Mammary epithelial cell (primary cell): ENCODE measurements at regions of chr22 and their contacts with region 1.

Region 1: DNA sequence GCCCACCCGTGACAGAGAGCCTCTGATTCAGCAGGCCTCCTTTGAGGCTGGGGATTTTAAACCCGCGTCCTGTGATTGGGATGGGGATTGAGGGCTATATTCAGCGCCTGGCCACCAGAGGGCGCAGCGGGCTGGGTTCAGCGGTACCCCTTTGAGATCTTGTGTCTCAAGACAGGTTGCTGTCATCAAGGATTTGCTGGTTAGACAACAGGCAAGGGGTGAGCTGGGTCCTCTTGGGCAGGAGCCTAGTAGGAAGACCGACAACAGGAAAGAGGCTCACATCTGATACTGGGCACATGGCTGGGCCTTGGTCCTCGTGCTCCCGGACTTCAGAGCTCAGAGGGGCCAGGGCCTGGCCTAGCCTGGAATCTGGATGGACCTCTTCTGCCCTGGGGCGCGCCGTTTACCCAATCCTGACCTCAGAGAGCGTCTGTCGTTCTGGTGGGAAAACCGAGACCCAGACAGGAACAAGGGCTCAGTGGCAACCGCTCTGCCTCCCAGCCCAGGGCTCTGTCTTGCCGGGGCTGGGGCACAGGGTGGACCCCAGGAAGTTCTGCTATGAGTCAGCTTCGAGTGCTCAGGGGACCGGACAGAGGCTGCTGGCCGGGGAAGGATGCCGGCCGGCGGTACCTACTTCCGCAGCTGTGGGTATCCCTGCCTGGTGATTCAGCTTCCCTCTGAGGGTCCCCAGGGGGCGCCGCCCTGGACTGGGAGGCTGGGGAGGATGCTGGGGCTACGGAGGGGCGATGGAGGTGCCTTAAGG is 929 bp upstream of the SLC35E4 start:
- DNase-seq: peak; percentile 82
- H3K4me3 ChIP-seq: peak overlapping the region in 1 of 3 experiments; percentile 38
- H3K27ac ChIP-seq: no peak overlapping the region
- H3K4me1 ChIP-seq: peaks cover 27% of the 10 kb centered on the region
- H3K27me3 ChIP-seq: no peaks in the 10 kb centered on the region
- CTCF ChIP-seq: peak; percentile 93

Region 2: GRCh38 chr22:30591588-30592359 is 42.9 kb before region 1 on chr22 and contains the start of gene PES1:
- CTCF ChIA-PET with region 1: no interaction called
- dilution Hi-C with region 1: no loop called
- in situ Hi-C with region 1: no loop called
- intact Hi-C with region 1: no loop called
- DNase-seq: peak; percentile 96
- H3K4me3 ChIP-seq: peak within 1 kb of the TSS; percentile 65 to 94 (median 84)
- H3K27ac ChIP-seq: peak within 1 kb of the TSS; percentile 97
- H3K4me1 ChIP-seq: peaks cover 11% of the 10 kb centered on the region
- H3K27me3 ChIP-seq: no peaks in the 10 kb centered on the region
- CTCF ChIP-seq: no peak
- total RNA-seq, gene PES1: 52.2 to 99.1 TPM

Region 3: DNA sequence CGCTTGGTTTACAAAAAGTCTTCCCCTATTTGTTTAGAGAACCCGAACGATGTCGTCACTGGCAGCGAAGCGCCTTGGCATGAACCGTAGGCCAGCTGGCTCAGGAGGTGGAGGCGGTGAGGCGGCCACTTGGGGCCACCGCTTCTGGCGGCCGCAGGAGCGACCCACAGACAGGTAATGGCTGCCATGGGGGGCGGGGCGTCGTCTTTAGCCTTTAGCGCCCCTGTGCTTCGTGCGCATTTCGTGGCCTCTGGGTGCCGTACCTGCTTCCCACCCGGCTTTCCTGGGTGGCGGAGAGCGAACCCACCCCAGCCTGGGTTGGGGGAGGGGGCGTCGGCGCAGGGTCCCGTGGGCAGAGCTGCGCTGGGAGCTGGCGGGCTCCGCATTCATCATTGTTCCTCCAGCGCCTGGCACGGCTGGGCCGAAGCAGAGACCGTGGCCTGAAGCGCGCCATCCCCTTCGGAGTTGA is 59.6 kb after region 1 on chr22:
- CTCF ChIA-PET with region 1: no interaction called
- dilution Hi-C with region 1: no loop called
- in situ Hi-C with region 1: no loop called
- intact Hi-C with region 1: loop called (anchors 1 kb)
- DNase-seq: peak; percentile 21
- H3K4me3 ChIP-seq: peak overlapping the region; percentile 40 to 70 (median 70)
- H3K27ac ChIP-seq: no peak overlapping the region
- H3K4me1 ChIP-seq: peaks cover 3% of the 10 kb centered on the region
- H3K27me3 ChIP-seq: no peaks in the 10 kb centered on the region
- CTCF ChIP-seq: no peak

Region 4: DNA sequence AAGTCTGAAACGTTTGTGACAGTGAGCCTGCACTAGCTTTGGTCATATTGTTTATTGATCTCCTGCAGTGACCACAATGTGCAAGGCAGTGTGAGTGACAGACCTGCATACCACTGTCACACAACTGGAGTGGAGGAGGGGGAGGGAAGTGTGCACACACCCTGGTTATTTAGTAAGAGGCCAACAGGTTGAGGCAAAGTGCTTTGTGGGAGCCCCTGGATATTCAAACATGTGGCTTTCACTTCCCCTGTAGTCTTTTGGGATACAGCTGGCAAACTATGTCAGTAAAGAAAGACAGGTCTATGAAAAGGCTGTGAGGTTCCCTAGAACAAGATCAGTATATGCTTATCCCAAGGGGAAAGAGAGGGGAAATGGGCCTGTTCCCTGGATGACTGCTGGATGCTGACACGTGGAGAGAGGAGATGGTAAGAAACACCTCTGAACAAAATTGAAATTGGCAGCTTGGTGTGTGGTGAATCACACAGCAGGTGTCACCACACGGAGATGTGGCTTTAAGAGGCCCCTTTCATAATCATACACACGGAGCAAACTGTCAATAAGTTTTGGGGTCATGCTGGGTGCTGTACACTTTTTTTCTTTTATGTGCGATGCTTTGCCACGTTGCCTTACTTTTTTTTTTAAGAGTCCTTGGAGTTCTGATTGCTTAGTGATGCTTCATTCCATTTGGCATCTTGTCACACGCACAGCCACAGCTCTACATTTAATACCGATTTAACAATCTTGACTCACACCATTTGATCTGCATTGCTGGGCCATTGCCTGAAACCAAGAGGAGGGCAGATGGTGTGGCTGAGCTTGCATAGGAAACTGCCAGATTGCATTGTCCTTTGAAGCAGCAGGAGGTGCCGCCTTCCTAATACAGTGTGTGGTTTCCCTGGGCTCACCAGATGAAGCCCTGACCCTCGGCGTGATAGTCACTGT is 71.3 kb after region 1 on chr22:
- CTCF ChIA-PET with region 1: no interaction called
- dilution Hi-C with region 1: no loop called
- in situ Hi-C with region 1: no loop called
- intact Hi-C with region 1: no loop called
- DNase-seq: no peak
- H3K4me3 ChIP-seq: no peak overlapping the region
- H3K27ac ChIP-seq: no peak overlapping the region
- H3K4me1 ChIP-seq: peaks cover 5% of the 10 kb centered on the region
- H3K27me3 ChIP-seq: no peaks in the 10 kb centered on the region
- CTCF ChIP-seq: no peak

Region 5: DNA sequence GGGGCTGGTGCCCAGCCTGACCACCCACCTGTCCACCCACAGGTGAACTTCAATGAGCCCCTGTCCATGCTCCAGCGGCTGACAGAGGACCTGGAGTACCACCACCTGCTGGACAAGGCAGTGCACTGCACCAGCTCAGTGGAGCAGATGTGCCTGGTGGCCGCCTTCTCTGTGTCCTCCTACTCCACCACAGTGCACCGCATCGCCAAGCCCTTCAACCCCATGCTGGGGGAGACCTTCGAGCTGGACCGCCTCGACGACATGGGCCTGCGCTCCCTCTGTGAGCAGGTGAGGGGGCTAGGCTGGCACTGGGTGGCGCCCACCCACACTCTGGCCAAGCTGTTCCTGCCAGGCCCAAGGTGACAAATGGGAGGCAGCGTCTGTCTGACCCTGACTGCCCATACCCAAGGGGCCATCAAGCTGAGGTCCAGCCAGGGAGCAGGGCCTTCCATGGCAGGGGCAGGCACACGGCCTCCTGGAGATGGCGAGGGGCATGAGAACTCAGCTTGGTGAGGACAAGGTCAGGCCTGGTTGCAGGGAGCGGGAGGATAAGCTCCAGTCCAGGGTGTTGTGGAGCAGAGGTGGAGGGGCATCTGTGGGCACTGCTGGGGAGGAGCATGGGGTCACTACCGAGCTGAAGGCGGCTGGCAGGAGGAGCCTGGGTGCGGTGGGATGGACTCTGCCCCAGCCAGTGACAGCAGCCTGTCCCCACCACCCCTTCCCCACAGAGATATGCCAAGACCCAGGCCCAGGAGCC is 256.2 kb after region 1 on chr22:
- CTCF ChIA-PET with region 1: no interaction called
- dilution Hi-C with region 1: no loop called
- in situ Hi-C with region 1: loop called in 1 of 2 experiments (anchors 25 kb)
- intact Hi-C with region 1: no loop called
- DNase-seq: peak; percentile 22
- H3K4me3 ChIP-seq: no peak overlapping the region
- H3K27ac ChIP-seq: no peak overlapping the region
- H3K4me1 ChIP-seq: no peaks in the 10 kb centered on the region
- H3K27me3 ChIP-seq: no peaks in the 10 kb centered on the region
- CTCF ChIP-seq: peak; percentile 91 to 93

Region 6: DNA sequence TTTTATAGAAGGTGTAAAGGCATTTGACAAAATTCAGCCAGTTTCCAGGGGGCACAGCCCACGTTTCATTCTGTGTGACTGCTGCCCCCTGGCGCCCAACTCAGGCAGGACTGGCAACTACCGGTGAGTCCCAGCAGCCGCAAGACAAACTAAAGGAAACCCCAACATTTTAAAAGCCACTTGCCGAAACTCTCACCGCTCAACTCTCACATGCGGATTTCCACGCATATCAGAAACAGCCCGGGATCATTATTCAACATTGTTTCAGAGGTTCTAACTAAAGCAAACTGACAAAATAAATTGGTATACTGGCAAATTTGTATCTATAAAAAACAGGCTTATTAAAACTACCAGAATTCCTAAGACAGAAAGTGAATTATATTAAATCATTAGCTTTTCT is 285.8 kb after region 1 on chr22:
- CTCF ChIA-PET with region 1: interaction called, 17 read pairs
- dilution Hi-C with region 1: no loop called
- in situ Hi-C with region 1: no loop called
- intact Hi-C with region 1: loop called (anchors 1 kb)
- DNase-seq: peak; percentile 52
- H3K4me3 ChIP-seq: no peak overlapping the region
- H3K27ac ChIP-seq: no peak overlapping the region
- H3K4me1 ChIP-seq: peaks cover 9% of the 10 kb centered on the region
- H3K27me3 ChIP-seq: no peaks in the 10 kb centered on the region
- CTCF ChIP-seq: peak; percentile 75 to 89

Region 7: DNA sequence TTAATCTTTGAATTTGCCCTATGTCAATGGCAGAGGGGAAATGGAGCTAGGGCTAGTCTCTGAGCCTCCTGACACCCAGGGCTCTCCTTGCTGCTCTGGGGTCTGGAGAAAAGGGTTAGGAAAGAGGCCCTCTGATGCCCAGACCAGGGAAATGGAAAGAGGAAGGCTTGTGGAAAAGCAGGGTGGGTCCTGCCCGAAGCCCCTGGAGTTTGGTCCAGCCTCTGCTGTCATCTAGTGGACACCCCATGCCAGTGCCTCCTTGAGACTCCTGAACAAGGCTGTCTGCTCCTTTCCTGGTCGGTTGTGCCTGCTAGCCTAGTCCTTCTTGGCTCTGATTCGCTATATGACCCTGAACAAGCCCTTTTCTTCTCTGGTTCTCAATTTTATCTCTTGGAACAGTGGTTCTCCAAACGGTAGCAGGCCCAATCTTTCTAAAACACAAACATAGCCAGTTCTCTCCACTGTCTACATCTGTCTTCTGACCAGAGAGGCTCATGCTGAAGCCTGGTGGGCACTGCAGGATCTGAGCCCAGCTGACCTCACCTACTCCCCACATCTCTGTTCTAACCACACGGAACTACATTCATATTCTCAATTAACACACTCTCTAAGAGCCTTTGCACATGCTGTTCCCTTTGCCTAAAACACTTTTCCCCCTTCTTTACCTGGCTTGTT is 514.4 kb after region 1 on chr22:
- CTCF ChIA-PET with region 1: no interaction called
- dilution Hi-C with region 1: no loop called
- in situ Hi-C with region 1: no loop called
- intact Hi-C with region 1: loop called (anchors 2 kb)
- DNase-seq: peak; percentile 48
- H3K4me3 ChIP-seq: no peak overlapping the region
- H3K27ac ChIP-seq: no peak overlapping the region
- H3K4me1 ChIP-seq: no peaks in the 10 kb centered on the region
- H3K27me3 ChIP-seq: no peaks in the 10 kb centered on the region
- CTCF ChIP-seq: peak; percentile 98 to 99